ENCODE measurements at regions of chr6 and their contacts with region 1.

Region 1: GRCh38 chr6:71349395-71349794 is 60.8 kb downstream of the OGFRL1 start:
- DNase-seq: no peak
- ATAC-seq: peak in 1 of 8 donors; percentile 52
- H3K4me3 ChIP-seq: no peak overlapping the region
- H3K27ac ChIP-seq: peak overlapping the region in 7 of 10 donors; percentile 28 to 83 (median 57)
- H3K4me1 ChIP-seq: peaks cover 0 to 38% (median 20%) of the 10 kb centered on the region in 9 donors
- H3K27me3 ChIP-seq: no peaks in the 10 kb centered on the region
- CTCF ChIP-seq: peak; percentile 60 to 85 (median 77)

Region 2: GRCh38 chr6:71012866-71013469 is 336.4 kb before region 1 on chr6:
- intact Hi-C with region 1: loop called in 1 of 10 experiments (anchors 10 kb)
- DNase-seq: peak in 1 of 2 donors; percentile 36
- ATAC-seq: peak in 6 of 8 donors; percentile 55 to 87 (median 76)
- H3K4me3 ChIP-seq: no peak overlapping the region
- H3K27ac ChIP-seq: no peak overlapping the region
- H3K4me1 ChIP-seq: no peaks in the 10 kb centered on the region
- H3K27me3 ChIP-seq: no peaks in the 10 kb centered on the region
- CTCF ChIP-seq: peak; percentile 49 to 82 (median 78)

Region 3: GRCh38 chr6:71181565-71181964 is 167.8 kb before region 1 on chr6:
- intact Hi-C with region 1: loop called in 2 of 10 experiments (anchors 10 kb)
- DNase-seq: no peak
- ATAC-seq: peak in 2 of 8 donors; percentile 42 to 81
- H3K4me3 ChIP-seq: no peak overlapping the region
- H3K27ac ChIP-seq: no peak overlapping the region
- H3K4me1 ChIP-seq: peaks cover 0 to 10% (median 0%) of the 10 kb centered on the region in 9 donors
- H3K27me3 ChIP-seq: no peaks in the 10 kb centered on the region
- CTCF ChIP-seq: no peak

Region 4: GRCh38 chr6:71248306-71248765 is 101.1 kb before region 1 on chr6:
- intact Hi-C with region 1: loop called in 1 of 10 experiments (anchors 10 kb)
- DNase-seq: peak in 1 of 2 donors; percentile 9
- ATAC-seq: peak in 7 of 8 donors; percentile 21 to 68 (median 52)
- H3K4me3 ChIP-seq: no peak overlapping the region
- H3K27ac ChIP-seq: peak overlapping the region in 3 of 10 donors; percentile 6 to 83 (median 79)
- H3K4me1 ChIP-seq: peaks cover 0 to 56% (median 36%) of the 10 kb centered on the region in 9 donors
- H3K27me3 ChIP-seq: no peaks in the 10 kb centered on the region
- CTCF ChIP-seq: no peak

Region 5: DNA sequence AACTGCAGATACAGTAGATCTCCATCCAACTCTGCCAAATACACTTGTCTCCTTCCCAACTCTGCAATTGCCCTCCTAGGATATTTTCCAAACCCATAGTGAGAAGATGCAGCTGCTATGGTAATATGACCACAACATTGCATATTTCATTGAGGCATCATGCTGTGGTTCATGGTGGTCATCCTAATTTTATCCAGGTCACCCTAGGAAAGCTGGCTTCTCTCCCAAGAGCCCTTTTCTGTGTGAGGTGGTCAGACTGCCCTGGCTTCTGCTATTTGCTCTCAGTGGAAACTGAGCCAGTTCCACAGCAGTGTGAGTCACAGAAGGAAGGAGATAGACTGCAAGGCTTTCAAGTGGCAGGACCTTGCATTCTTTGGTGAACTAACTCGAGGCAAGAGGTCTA is 55.3 kb before region 1 on chr6:
- intact Hi-C with region 1: loop called in 2 of 10 experiments (anchors 5 to 10 kb)
- DNase-seq: no peak
- ATAC-seq: peak in 5 of 8 donors; percentile 22 to 77 (median 46)
- H3K4me3 ChIP-seq: no peak overlapping the region
- H3K27ac ChIP-seq: peak overlapping the region in 2 of 10 donors; percentile 16 to 17
- H3K4me1 ChIP-seq: peaks cover 0 to 49% (median 31%) of the 10 kb centered on the region in 9 donors
- H3K27me3 ChIP-seq: no peaks in the 10 kb centered on the region
- CTCF ChIP-seq: no peak